ENCODE measurements at regions of chr17 and their contacts with region 1.

Region 1: DNA sequence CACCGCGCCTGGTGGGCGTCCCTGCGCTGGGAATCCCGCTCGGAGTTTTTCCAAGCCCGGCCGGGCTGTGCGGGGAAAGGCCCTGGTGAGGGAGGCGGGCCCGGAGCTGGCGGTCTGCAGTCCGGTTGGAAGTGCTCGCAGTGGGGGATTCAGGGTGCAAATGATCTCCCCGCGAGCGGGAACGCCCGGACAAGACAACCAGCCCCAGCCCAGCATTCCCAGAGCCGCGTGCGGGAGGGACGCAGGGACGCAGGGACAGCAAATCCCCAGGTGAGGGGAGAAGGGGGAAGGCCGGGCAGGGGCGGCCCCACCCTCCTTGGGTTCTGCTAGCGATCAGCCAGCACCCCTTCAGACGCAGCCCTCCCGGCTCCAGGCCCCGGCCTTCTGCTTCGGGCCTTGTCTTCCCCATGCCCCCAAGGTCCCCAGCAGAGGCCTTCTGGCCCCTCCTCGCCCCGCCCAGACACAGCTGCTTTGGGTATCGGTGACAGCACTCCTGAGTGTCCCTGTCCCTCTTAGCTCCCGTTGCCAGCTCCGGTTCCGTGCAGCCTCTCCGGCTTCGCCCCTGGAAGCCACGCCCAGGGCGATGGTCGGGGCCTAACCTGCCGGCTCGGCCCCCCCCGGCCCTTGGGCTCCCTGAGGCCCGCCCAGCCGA is 50.8 kb upstream of the AMZ2 start:
- DNase-seq: peak in 3 of 5 donors; percentile 24 to 71 (median 45)
- H3K4me3 ChIP-seq: peak overlapping the region; percentile 56
- H3K4me3 Mint-ChIP-seq: peak overlapping the region; percentile 76 to 91 (median 81)
- H3K27ac ChIP-seq: no peak overlapping the region
- H3K27ac Mint-ChIP-seq: peak overlapping the region in 2 of 8 donors; percentile 74 to 80
- H3K4me1 ChIP-seq: peaks cover 30% of the 10 kb centered on the region
- H3K4me1 Mint-ChIP-seq: peaks cover 29 to 59% (median 29%) of the 10 kb centered on the region in 3 donors
- H3K27me3 ChIP-seq: peaks cover 6% of the 10 kb centered on the region
- H3K27me3 Mint-ChIP-seq: peaks cover 0 to 4% of the 10 kb centered on the region in 2 donors

Region 2: DNA sequence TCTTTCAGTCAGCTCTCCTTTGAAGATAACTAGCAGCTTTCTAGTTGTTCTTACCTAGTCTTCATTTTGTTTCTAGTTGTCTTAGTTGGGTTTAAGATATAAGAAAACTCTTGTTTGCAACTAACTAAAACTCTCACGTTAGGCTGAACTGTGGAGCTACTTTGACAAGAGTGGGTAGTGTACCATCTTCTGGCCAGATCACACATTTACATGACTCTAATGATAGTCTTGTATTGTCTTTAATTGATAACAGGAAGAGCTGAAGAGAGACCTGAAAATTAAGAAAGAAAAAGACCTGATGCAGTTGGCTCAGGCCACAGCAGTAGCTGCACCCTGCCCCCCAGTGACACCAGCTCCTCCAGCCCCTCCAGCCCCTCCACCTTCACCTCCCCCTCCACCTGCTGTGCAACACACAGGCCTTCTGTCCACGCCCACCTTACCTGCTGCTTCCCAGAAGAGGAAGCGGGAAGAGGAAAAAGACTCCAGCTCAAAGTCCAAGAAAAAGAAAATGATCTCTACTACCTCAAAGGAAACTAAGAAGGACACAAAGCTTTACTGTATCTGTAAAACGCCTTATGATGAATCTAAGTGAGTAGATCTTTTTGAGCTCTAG is 237.7 kb before region 1 on chr17:
- CTCF ChIA-PET with region 1: no interaction called
- POLR2A ChIA-PET with region 1: no interaction called
- DNase-seq: no peak
- H3K4me3 ChIP-seq: no peak overlapping the region
- H3K4me3 Mint-ChIP-seq: no peak overlapping the region
- H3K27ac ChIP-seq: no peak overlapping the region
- H3K27ac Mint-ChIP-seq: peak overlapping the region in 6 of 8 donors; percentile 17 to 81 (median 67)
- H3K4me1 ChIP-seq: no peaks in the 10 kb centered on the region
- H3K4me1 Mint-ChIP-seq: peaks cover 4 to 5% (median 4%) of the 10 kb centered on the region in 3 donors
- H3K27me3 ChIP-seq: no peaks in the 10 kb centered on the region
- H3K27me3 Mint-ChIP-seq: peaks cover 0 to 1% of the 10 kb centered on the region in 2 donors

Region 3: DNA sequence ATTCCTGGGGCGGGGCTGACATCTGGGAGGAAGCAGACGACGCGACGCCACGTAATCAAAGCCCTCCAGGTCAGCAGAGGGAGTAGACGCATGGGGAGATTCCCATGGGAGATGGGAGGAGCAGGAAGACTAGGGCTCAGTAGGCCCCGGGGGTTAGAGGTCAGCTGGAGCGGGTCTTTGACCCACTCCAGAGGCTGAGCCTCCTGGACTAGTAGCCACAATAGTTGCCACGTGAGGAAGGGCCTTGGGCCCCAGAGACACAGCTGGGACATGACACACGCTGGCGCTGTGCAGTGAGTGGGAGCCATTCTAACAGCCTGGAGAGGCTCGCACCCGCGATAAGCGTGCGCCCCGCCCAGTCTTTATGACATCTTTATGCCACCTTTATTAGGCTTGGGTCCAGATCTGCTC is 44.9 kb before region 1 on chr17:
- CTCF ChIA-PET with region 1: no interaction called
- POLR2A ChIA-PET with region 1: no interaction called
- DNase-seq: no peak
- H3K4me3 ChIP-seq: no peak overlapping the region
- H3K4me3 Mint-ChIP-seq: no peak overlapping the region
- H3K27ac ChIP-seq: no peak overlapping the region
- H3K27ac Mint-ChIP-seq: no peak overlapping the region
- H3K4me1 ChIP-seq: no peaks in the 10 kb centered on the region
- H3K4me1 Mint-ChIP-seq: no peaks in the 10 kb centered on the region
- H3K27me3 ChIP-seq: no peaks in the 10 kb centered on the region
- H3K27me3 Mint-ChIP-seq: no peaks in the 10 kb centered on the region

Region 4: DNA sequence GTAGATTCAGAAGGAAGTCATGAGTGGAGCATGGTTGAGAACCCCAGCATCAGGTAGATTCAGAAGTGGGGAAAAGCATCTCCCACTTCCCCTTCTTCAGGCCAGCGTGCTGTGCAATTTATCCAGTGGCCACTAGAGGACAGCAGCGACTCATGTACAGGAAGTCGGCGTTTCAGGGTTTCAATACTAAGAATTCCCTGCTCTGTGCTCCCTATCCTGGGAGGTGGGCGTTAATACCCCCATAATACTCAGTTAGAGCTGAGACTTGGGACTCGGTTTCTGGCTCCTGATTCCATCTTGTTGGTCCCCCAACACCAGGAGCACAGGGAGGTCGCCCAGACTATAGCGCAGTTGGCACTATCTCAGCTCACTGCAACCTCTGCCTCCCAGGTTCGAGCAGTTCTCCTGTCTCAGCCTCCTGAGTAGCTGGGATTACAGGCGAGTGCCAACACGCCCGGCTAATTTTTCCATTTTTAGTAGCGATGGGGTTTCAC is 24.6 kb before region 1 on chr17:
- CTCF ChIA-PET with region 1: interaction called, 123 read pairs
- POLR2A ChIA-PET with region 1: interaction called, 7 read pairs
- DNase-seq: peak; percentile 61 to 82 (median 68)
- H3K4me3 ChIP-seq: no peak overlapping the region
- H3K4me3 Mint-ChIP-seq: no peak overlapping the region
- H3K27ac ChIP-seq: no peak overlapping the region
- H3K27ac Mint-ChIP-seq: no peak overlapping the region
- H3K4me1 ChIP-seq: peaks cover 7% of the 10 kb centered on the region
- H3K4me1 Mint-ChIP-seq: peaks cover 11 to 31% (median 19%) of the 10 kb centered on the region in 3 donors
- H3K27me3 ChIP-seq: no peaks in the 10 kb centered on the region
- H3K27me3 Mint-ChIP-seq: no peaks in the 10 kb centered on the region